ENCODE measurements at regions of chr3 and their contacts with region 1.

Region 1: GRCh38 chr3:59052803-59053411 is 3.1 kb upstream of the CFAP20DC start:
- DNase-seq: peak; percentile 22
- CTCF ChIP-seq: peak; percentile 47

Region 2: DNA sequence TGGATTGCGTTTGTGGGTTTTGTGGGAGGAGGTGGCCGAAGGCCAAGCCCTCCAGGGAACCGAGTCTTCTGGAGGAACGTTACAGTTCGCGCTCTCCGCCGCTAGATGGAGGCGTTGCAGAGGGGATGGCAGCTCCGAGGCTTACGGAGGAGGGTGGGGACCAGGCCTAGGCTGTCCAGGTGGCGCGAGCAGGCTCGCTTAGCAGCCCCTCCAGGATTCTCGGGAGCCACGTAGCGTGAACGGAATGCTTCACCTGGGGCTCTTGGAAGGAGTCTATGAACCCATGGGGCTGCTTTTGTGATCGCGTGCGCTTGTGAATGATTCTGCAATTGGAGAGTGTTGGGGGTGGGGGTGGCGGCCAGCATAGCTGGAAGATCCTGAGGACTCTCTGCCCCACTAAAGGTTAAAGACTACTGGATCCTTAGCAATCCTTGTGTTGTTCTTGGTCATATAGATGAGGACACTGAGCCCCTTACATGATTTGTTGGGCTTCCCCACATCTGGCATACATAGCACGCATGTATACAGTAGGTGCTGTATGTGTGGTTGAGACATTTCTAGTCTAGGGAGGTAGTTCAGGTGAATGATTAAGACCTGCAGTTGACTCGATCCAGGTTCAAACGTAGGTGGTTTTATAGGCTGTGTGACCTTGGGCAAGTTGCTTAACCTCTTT is 412.1 kb before region 1 on chr3:
- CTCF ChIA-PET with region 1: interaction called, 32 read pairs
- POLR2A ChIA-PET with region 1: no interaction called
- DNase-seq: peak; percentile 82
- CTCF ChIP-seq: peak; percentile 87

Region 3: GRCh38 chr3:58824285-58824684 is 228.6 kb before region 1 on chr3:
- CTCF ChIA-PET with region 1: interaction called, 29 read pairs
- POLR2A ChIA-PET with region 1: no interaction called
- DNase-seq: peak; percentile 25
- CTCF ChIP-seq: peak; percentile 51

Region 4: DNA sequence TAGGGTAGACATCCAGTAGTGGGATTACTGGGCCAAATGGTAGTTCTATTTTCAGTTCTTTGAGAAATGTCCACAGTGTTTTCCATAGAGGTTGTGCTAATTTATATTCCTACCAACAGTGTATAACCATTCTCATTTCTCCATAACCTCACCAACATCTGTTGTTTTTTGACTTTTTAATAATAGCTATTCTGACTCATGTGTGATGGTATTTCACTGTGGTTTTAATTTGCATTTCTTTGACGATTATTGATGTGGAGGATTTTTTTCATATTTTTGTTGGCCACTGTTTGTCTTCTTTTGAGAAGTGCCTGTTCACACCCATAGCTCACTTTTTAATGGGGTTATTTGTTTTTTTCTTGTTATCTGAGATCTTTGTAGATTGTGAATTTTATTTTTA is 128.3 kb before region 1 on chr3:
- CTCF ChIA-PET with region 1: no interaction called
- POLR2A ChIA-PET with region 1: no interaction called
- DNase-seq: no peak
- CTCF ChIP-seq: no peak

Region 5: DNA sequence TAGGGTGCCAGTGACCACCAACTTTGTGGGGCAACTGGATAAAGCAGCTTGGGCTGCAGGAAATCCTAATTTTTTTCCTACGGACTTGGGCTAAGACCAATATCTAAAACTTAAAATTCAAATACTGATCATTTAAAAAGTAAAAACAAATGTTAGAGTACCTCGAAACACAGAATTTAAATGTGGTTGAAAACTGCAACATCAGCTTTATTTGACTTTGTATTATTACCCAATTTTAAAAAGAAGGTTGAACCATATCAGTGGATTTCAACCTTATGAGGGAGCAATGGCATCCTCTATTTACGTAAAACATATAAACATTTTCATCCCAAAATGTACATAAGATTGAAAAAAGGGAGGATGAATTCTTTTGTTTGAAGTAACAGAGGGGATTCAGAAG is 29.3 kb before region 1 on chr3:
- CTCF ChIA-PET with region 1: no interaction called
- POLR2A ChIA-PET with region 1: no interaction called
- DNase-seq: no peak
- CTCF ChIP-seq: no peak

Region 6: GRCh38 chr3:59072681-59073080 is 19.8 kb after region 1 on chr3:
- CTCF ChIA-PET with region 1: interaction called, 12 read pairs
- POLR2A ChIA-PET with region 1: no interaction called
- DNase-seq: no peak
- CTCF ChIP-seq: no peak